ENCODE measurements at regions of chr5 and their contacts with region 1.

Region 1: DNA sequence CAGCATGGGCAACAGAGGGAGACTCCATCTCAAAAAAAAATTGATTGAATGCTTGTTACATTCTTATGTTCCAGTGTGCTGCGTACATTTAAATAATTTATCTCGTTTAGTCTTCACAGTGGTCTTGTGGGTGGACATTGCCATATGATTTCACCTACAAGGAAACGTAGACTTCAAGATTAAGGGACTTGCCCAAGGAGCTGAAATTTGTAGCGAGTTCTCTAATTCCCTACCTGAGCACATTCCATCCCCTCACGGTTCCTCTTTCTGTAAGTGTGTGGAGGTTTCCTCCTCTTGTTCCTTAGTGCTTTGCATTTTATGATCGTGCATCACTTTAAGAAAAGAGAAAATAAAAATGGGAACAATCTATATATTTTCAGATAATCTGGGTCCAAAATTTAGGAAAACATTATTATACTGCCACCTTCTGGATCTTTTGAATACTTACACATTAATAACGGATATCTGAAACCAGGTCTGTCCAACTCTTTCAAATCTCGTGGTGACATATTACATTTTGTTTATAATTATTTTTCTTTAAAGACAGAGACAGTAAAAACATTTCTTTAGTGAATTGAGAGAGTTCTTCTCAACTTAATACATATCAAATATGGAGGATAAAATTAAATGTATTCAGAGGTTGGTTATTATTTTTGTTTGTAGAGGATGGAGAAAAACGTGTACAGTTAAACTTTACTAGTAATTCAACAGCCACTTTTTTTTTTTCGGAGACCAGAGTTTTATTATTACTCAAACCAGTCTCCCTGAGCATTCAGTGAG is 29.9 kb upstream of the C7 start:
- DNase-seq: peak; percentile 13
- ATAC-seq: peak; percentile 71
- H3K4me3 ChIP-seq: no peak overlapping the region
- H3K27ac ChIP-seq: no peak overlapping the region
- H3K4me1 ChIP-seq: peaks cover 0 to 4% of the 10 kb centered on the region in 2 experiments; a peak in 1 of 4 replicates
- H3K27me3 ChIP-seq: no peaks in the 10 kb centered on the region
- CTCF ChIP-seq: peak; percentile 16 to 63 (median 45); a peak in 3 of 6 replicates
- POLR2A ChIP-seq: no peak
- RAD21 ChIP-seq: peak; percentile 65

Region 2: DNA sequence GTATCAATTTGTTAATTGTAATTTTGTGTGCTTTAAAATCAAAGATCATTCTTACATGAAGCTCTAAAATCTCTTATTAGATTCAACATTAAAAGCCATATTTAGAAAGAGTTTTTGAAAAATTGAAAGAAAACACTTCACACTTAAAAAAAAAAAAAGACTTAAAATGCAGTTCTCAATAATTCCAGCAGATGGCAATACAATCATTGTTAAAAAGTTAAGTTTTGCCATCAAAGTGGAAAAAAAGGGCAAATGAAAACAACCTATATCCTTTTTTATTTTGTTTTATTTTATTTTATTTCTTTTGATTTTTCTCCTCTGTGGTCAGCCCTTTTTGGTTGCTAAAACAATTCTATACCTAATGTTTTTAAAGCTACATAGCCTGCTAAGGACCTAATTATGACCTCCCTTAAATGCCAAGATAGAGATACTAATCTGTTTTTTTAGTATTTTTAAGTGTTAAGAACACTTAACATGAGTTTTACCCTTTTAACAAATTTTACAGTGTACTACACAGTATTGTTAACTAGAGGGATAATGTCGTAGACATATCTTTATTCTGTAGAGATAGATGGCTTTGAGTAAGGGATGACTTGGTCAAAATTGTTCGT is 1300.4 kb before region 1 on chr5:
- CTCF ChIA-PET with region 1: no interaction called
- POLR2A ChIA-PET with region 1: no interaction called
- RAD21 ChIA-PET with region 1: no interaction called
- intact Hi-C with region 1: loop called (anchors 5 kb)
- DNase-seq: peak; percentile 18
- ATAC-seq: no peak
- H3K4me3 ChIP-seq: no peak overlapping the region
- H3K27ac ChIP-seq: no peak overlapping the region
- H3K4me1 ChIP-seq: no peaks in the 10 kb centered on the region
- H3K27me3 ChIP-seq: no peaks in the 10 kb centered on the region
- CTCF ChIP-seq: peak; percentile 16 to 59 (median 19); a peak in 3 of 6 replicates
- POLR2A ChIP-seq: no peak
- RAD21 ChIP-seq: peak; percentile 62

Region 3: DNA sequence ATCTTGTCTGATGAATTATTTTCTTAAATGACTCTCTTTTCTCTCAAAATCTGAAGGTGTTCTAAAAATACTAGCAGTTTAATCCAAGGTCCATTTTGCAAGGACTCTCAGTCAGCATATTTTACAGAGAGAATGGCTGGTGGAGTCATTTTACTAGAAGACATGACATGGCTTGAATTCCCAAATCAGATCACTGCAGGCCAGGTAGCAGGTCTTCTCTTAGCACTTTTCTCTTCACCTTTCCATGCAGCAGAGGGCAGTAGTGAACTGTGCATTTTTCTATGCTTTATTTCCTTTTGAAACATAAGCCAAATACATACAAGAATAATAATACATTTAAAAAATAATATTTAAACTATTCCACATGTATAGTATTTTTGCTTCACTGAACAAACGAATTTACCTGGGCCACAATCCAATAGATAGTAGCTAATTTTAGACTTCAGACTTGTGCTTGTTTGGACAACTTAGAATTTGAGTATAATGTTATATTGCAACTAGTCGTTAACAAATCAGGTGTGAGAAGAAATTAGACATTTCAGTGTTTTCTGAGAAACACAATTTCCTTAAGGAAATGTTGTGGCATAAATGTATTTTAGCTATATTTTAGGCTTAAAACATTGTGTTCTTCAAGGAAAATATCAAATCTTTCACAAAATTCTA is 1165.2 kb before region 1 on chr5:
- CTCF ChIA-PET with region 1: no interaction called
- POLR2A ChIA-PET with region 1: no interaction called
- RAD21 ChIA-PET with region 1: no interaction called
- intact Hi-C with region 1: loop called (anchors 2 kb)
- DNase-seq: peak; percentile 69
- ATAC-seq: peak; percentile 76
- H3K4me3 ChIP-seq: no peak overlapping the region
- H3K27ac ChIP-seq: no peak overlapping the region
- H3K4me1 ChIP-seq: no peaks in the 10 kb centered on the region; a peak in 1 of 4 replicates
- H3K27me3 ChIP-seq: no peaks in the 10 kb centered on the region
- CTCF ChIP-seq: peak; percentile 53 to 69 (median 65)
- POLR2A ChIP-seq: no peak
- RAD21 ChIP-seq: peak; percentile 80

Region 4: GRCh38 chr5:39948867-39949468 is 930.4 kb before region 1 on chr5:
- CTCF ChIA-PET with region 1: no interaction called
- POLR2A ChIA-PET with region 1: no interaction called
- RAD21 ChIA-PET with region 1: no interaction called
- intact Hi-C with region 1: loop called (anchors 10 kb)
- DNase-seq: peak; percentile 69
- ATAC-seq: peak; percentile 87
- H3K4me3 ChIP-seq: no peak overlapping the region
- H3K27ac ChIP-seq: no peak overlapping the region
- H3K4me1 ChIP-seq: no peaks in the 10 kb centered on the region
- H3K27me3 ChIP-seq: no peaks in the 10 kb centered on the region
- CTCF ChIP-seq: peak; percentile 52 to 74 (median 58); a peak in 5 of 6 replicates
- POLR2A ChIP-seq: no peak
- RAD21 ChIP-seq: peak; percentile 76

Region 5: DNA sequence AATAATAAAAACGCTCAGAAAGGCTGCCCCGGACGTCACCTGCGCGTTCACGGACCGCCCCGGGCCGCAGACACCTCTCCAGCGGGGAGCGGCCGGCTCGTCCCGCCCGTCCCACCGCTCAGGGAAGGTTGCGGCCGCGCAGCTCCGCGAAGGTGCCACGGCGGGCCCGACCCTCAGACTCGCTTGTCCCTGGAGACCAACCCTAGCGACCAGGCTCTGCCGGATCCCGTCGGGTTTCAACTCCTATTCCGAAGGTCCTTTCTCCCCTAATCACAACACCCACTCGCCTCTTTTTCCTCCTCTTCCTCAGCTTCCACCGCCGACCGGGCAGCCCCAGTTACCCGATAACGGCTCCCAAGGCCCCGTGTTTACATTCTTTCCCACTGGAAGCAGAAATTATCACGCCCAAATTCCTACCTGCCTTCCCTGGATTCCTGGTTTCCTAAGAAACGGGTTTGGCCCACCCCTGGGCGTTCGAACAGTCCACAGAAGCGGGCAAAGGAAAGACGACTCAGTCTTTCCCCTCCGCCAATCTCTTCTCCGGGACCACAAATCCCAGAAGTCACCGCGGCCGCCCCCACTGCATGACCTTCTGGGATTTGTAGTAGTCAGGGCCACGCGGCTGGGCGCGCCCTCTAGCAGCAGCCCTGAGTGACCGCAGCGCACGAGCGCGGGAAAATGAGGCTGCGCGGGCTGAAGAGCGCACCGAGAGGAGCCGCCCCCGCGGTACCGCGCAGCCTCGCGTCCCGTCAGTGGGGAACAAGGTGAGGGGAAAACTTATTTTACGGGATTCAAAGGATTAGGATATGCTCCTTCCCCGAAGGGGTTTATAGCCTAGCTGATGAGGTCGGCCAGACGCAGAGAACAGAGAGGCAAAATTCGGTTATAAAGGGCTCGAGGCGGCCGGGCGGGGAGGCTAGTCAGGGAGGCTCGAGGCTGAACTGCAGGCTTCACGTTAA is 123.7 kb before region 1 on chr5 and contains the start of gene TTC33:
- CTCF ChIA-PET with region 1: no interaction called
- POLR2A ChIA-PET with region 1: no interaction called
- RAD21 ChIA-PET with region 1: no interaction called
- intact Hi-C with region 1: loop called (anchors 2 kb)
- DNase-seq: peak; percentile 89
- ATAC-seq: peak; percentile 90
- H3K4me3 ChIP-seq: peak within 1 kb of the TSS; percentile 90 to 91
- H3K27ac ChIP-seq: peak within 1 kb of the TSS; percentile 75
- H3K4me1 ChIP-seq: peaks cover 4 to 15% of the 10 kb centered on the region in 2 experiments; a peak in 3 of 4 replicates
- H3K27me3 ChIP-seq: no peaks in the 10 kb centered on the region
- CTCF ChIP-seq: peak; percentile 56 to 61 (median 57); a peak in 5 of 6 replicates
- POLR2A ChIP-seq: no peak
- RAD21 ChIP-seq: 0 out of 2 replicates have a peak, but pooled peaks have one; percentile 22
- total RNA-seq, gene TTC33: 14.5 TPM